RWPE1 (cell line): ENCODE measurements at regions of chr3 and their contacts with region 1.

Region 1: DNA sequence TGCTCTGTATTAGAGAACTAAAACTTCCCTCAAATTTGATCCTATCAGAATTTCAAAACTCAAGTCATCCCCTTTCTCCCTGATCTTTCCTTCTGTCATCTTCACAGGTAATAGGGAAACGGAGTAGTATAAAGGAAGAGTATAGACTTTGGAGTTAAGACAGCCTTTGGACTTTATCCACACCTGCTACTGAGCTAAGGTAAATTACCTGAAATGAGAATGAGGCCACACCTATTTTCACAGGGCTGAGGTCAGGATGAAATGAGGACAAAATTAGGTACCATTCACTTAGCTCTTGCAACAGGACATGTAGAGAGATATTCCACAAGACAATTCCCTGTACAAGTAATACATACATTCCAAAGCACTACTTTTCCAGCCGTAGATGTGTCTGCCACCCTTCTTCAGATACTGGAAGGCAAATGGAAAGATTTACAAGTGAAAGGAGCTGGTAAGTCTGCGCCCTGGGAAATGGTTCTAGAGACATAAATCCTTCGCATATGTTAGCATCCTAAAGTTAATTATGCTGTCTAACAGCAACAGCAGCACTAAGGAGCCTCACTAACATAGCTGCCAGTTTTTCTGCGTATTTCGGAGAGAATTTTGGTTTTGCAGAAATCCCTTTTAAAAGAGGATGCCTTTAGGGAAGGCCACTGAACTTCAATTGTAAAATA is 461.8 kb downstream of the SHQ1 start:
- DNase-seq: no peak
- H3K27ac ChIP-seq: no peak overlapping the region
- CTCF ChIP-seq: no peak

Region 2: GRCh38 chr3:72411843-72412242 is 25.4 kb after region 1 on chr3:
- CTCF ChIA-PET with region 1: interaction called, 11 read pairs
- POLR2A ChIA-PET with region 1: no interaction called
- DNase-seq: no peak
- H3K27ac ChIP-seq: no peak overlapping the region
- CTCF ChIP-seq: no peak

Region 3: DNA sequence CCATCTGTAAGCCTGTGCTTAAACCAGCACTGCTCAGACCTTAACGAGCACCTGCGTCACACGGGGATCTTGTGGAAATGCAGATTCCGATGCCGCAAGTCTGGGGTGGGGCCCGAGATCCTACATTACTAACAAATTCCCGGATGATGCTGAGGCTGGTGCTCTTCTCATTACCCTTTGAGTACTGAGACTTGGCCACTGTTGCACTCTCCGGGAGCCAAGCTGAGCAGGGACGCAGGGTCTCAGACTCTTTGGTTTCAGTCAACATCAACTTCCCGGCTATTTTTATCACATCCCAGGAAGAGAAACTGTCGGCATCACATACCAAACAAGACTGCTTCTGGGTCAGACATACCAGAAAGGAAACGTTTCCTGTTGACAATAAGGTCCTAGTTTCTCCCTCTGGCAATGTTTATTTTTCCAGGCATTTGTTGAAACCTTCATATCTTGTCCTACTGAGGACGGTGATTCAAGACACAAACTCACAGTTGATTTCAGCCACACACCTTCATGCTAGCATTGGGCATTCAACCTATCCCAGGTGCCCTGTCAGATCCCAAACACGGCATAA is 185.3 kb after region 1 on chr3:
- CTCF ChIA-PET with region 1: no interaction called
- POLR2A ChIA-PET with region 1: no interaction called
- DNase-seq: no peak
- H3K27ac ChIP-seq: no peak overlapping the region
- CTCF ChIP-seq: no peak